ENCODE measurements at regions of chr4 and their contacts with region 1.

Region 1: DNA sequence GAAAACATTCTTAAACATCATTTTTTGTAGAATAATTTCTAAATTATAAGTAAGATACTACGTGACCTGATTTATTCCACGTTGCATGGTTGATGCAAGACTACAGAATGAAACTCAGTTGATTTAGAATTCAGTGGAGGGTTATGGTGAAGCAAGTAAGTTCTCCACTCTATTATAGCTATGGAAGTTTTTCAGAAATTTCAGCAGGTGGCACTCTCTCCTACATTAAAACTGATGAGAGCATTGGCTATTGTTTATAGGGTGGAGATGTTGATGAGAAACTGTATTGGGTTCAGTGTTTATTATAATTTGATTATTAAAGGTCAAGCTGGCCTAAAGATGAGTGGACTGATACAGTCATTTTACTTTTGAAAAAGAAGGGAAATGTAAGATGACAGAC is 88.0 kb downstream of the FNIP2 start:
- DNase-seq: no peak
- H3K4me3 ChIP-seq: no peak overlapping the region
- H3K27ac ChIP-seq: peak overlapping the region in 6 of 59 donors; percentile 7 to 59 (median 35)
- H3K27me3 ChIP-seq: no peaks in the 10 kb centered on the region
- CTCF ChIP-seq: peak; percentile 42 to 80 (median 64)

Region 2: GRCh38 chr4:159175085-159175988 is 318.5 kb after region 1 on chr4:
- intact Hi-C with region 1: loop called (anchors 2 to 5 kb)
- DNase-seq: peak in 7 of 10 donors; percentile 54 to 75 (median 59)
- H3K4me3 ChIP-seq: peak overlapping the region in 56 of 59 donors; percentile 5 to 62 (median 36)
- H3K27ac ChIP-seq: peak overlapping the region in 46 of 59 donors; percentile 0 to 78 (median 46)
- H3K27me3 ChIP-seq: no peaks in the 10 kb centered on the region
- CTCF ChIP-seq: peak; percentile 57 to 96 (median 88)

Region 3: DNA sequence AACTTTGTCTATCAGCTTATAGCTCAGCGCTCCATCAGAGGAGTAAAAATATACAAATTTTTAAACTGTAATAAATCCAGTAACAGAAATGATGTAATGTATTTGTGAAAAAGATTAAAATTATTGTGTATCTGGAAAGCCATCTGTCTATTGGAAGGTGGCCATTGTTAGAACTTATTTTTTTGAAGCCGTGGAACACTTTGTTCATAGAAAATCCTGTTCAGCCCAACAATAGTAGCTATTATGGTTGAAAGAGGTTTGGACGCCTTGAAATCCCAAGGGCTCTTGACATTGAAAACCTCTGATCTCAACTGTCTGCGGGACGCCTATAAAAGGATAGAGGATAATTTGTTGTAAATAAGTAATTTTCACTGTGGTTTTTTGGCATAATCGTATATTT is 344.3 kb after region 1 on chr4:
- intact Hi-C with region 1: loop called (anchors 5 kb)
- DNase-seq: no peak
- H3K4me3 ChIP-seq: peak overlapping the region in 1 of 59 donors; percentile 3
- H3K27ac ChIP-seq: peak overlapping the region in 47 of 59 donors; percentile 0 to 83 (median 58)
- H3K27me3 ChIP-seq: no peaks in the 10 kb centered on the region
- CTCF ChIP-seq: peak in 1 of 56 donors; percentile 29

Measured in dorsolateral prefrontal cortex (tissue), 120 donors.